B cell (primary cell): ENCODE measurements at regions of chr1 and their contacts with region 1.

Region 1: DNA sequence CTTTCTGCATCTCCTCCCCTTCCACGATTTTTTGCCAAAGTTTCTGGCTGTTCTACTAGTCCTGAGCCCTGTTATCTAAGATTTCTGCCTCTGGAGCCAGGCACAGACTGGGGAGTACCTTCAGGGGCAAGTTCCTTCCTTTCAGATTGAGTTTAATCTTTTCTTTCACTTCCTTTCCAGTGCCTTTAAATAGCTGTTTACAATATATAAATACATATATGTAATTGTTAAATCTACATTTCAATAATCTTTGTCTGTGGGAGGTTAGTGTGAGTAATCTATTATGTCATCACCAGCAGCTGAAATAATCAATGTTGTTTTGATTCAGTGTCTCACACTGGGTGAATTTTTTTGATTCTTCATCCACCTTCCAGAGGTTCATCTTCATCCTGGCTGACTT is 31.8 kb downstream of the DIPK1A start:
- DNase-seq: no peak
- ATAC-seq: peak; percentile 43
- H3K4me3 ChIP-seq: peak overlapping the region in 2 of 5 experiments; percentile 8 to 29
- H3K4me3 Mint-ChIP-seq: peak overlapping the region; percentile 75
- H3K27ac ChIP-seq: peak overlapping the region; percentile 57 to 82
- H3K27ac Mint-ChIP-seq: peak overlapping the region; percentile 86
- H3K4me1 ChIP-seq: peaks cover 55 to 80% of the 10 kb centered on the region in 2 donors
- H3K4me1 Mint-ChIP-seq: peaks cover 73% of the 10 kb centered on the region
- H3K27me3 ChIP-seq: no peaks in the 10 kb centered on the region
- H3K27me3 Mint-ChIP-seq: no peaks in the 10 kb centered on the region
- CTCF ChIP-seq: no peak

Region 2: DNA sequence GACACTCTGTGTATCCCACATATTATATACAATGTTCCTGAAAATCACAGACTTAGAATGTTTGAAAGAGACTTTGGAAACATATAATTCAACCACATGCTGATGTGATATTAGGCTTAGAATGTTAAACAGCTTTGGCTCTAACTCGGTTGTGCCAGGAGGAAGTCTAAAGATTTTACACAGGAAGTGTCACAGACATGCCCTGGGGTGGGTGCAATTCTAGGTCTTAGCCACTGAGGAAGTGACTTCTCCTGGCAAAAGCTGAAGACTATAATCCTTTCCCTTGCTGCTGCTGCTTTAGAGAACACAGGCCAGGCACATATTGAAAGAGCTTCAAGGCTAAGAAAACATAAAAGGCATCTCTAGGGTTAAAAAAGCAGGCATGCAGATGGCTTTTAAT is 46.6 kb before region 1 on chr1:
- CTCF ChIA-PET with region 1: interaction called, 3 read pairs
- POLR2A ChIA-PET with region 1: no interaction called
- intact Hi-C with region 1: loop called (anchors 5 kb)
- DNase-seq: peak; percentile 43
- ATAC-seq: peak; percentile 54
- H3K4me3 ChIP-seq: no peak overlapping the region
- H3K4me3 Mint-ChIP-seq: peak overlapping the region; percentile 40
- H3K27ac ChIP-seq: peak overlapping the region in 1 of 2 donors; percentile 76
- H3K27ac Mint-ChIP-seq: peak overlapping the region; percentile 83
- H3K4me1 ChIP-seq: peaks cover 22 to 25% of the 10 kb centered on the region in 2 donors
- H3K4me1 Mint-ChIP-seq: peaks cover 45% of the 10 kb centered on the region
- H3K27me3 ChIP-seq: no peaks in the 10 kb centered on the region
- H3K27me3 Mint-ChIP-seq: no peaks in the 10 kb centered on the region
- CTCF ChIP-seq: no peak